ENCODE measurements at regions of chrX and their contacts with region 1.

Region 1: DNA sequence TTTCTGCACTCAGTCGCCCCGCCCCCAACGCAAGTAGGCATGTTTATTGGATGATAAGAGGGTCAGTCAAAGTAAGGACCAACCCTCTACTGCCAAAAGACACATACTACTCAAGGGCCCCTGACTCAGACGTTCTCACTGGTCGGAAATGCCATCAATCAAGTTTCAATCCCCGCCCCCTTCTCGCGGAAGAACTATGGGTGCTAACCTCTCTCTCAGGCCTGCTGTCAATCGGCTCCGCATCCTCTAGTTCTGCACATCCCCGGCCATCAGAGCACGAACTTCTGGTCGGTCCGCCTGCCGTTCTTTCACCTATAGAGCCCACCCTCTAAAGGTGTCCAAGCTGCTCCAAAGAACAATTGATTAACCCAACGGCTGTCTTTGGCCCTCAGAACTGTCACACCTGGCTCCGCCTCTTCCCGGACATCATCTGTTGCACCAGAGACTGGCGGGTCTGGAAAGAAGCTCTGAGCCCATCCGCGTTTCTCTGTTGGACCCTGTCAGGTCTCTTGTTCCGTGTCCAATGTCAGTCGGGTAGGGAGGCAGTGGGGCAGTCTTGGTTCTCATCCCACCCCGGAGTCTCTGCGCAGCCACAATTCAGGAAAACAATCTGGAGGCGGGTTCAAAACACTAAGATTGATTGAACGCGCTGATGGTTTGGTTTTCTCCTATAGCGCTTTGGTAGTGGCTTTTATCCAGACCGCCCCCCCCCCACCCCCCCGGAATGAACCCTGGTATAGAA is 15.2 kb downstream of the NDUFB11 start:
- DNase-seq: peak; percentile 92
- ATAC-seq: peak; percentile 100
- H3K4me3 Mint-ChIP-seq: peak overlapping the region; percentile 96
- H3K27ac Mint-ChIP-seq: peak overlapping the region; percentile 99
- H3K4me1 Mint-ChIP-seq: peaks cover 7% of the 10 kb centered on the region
- H3K27me3 Mint-ChIP-seq: no peaks in the 10 kb centered on the region

Region 2: GRCh38 chrX:47144626-47145394 is 15.5 kb after region 1 on chrX and contains the starts of genes NDUFB11 and RBM10:
- CTCF ChIA-PET with region 1: interaction called, 8 read pairs
- POLR2A ChIA-PET with region 1: interaction called, 13 read pairs
- DNase-seq: peak; percentile 94
- ATAC-seq: peak; percentile 97
- H3K4me3 Mint-ChIP-seq: peak within 1 kb of the TSS; percentile 98
- H3K27ac Mint-ChIP-seq: peak within 1 kb of the TSS; percentile 99
- H3K4me1 Mint-ChIP-seq: peaks cover 30% of the 10 kb centered on the region
- H3K27me3 Mint-ChIP-seq: no peaks in the 10 kb centered on the region
- total RNA-seq, gene NDUFB11: 92.9 to 103 TPM
- total RNA-seq, gene RBM10: 62.2 to 64.1 TPM

Measured in activated CD8-positive, alpha-beta T cell treated with anti-CD3 and anti-CD28 coated beads, Interleukin-2, amount 10 ng/mL, durations not matched to agents 7 days and 5 days (primary cell).